OCI-LY7 (cell line): ENCODE measurements at regions of chr6 and their contacts with region 1.

Region 1: GRCh38 chr6:161044335-161044734 is 52.8 kb downstream of the MAP3K4 start:
- DNase-seq: no peak
- H3K4me3 ChIP-seq: no peak overlapping the region
- H3K27ac ChIP-seq: no peak overlapping the region
- H3K4me1 ChIP-seq: no peaks in the 10 kb centered on the region
- CTCF ChIP-seq: no peak

Region 2: DNA sequence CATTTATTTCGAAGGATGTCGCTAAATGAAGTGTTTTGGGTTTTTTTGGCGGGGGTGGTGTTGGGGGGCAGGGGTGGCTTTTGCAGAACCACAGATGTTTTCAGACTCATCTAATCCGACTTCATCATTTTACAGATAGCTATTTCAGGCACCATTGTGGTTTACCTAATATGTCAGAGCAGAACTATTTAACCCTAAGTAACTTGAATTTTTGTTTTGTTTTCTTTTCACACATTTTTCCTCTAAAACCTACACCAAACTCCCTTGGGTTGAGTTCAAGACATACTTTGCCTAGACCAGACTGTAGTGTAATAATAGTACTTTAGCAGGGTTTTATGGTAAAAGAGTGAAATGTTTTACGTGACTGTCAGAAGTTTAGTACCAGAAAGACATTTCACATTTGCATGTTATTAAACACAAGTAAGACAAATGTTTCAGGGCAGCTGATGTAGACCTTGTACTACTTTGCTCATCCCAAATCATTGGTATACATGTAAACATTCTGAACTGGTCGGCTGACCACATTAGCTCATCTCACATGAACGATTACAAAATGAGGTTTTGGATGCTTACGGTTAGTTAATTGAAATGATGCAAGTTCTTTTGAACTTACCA is 15.0 kb before region 1 on chr6:
- CTCF ChIA-PET with region 1: no interaction called
- POLR2A ChIA-PET with region 1: interaction called, 12 read pairs
- intact Hi-C with region 1: no loop called
- DNase-seq: no peak
- H3K4me3 ChIP-seq: no peak overlapping the region
- H3K27ac ChIP-seq: no peak overlapping the region
- H3K4me1 ChIP-seq: peaks cover 10% of the 10 kb centered on the region
- CTCF ChIP-seq: no peak